Breast epithelium (tissue), 4 donors: ENCODE measurements at regions of chr14 and their contacts with region 1.

Region 1: DNA sequence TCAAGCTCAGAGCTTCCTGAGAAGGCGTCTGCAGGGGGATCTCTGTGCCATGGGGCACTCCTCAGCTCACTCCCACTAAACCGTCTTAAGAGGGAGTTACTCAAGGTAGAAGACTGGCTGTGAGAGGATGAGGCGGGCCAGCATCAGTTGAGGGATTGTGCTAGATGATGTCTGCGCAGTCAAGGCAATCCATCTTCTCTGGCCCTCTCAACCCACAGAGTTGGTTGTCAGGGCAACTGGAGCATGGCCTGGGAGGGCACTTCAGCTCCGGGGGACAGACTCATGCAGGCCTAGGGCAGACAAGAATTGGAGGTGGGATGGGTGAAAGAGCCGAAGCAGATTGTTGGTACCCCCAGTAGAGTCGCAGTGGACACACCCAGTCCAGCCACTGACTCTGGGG is 9.0 kb downstream of the GSTZ1 start:
- DNase-seq: no peak
- H3K4me3 ChIP-seq: no peak overlapping the region
- H3K27ac ChIP-seq: no peak overlapping the region
- H3K4me1 ChIP-seq: no peaks in the 10 kb centered on the region
- H3K27me3 ChIP-seq: no peaks in the 10 kb centered on the region
- CTCF ChIP-seq: no peak
- POLR2A ChIP-seq: no peak

Region 2: DNA sequence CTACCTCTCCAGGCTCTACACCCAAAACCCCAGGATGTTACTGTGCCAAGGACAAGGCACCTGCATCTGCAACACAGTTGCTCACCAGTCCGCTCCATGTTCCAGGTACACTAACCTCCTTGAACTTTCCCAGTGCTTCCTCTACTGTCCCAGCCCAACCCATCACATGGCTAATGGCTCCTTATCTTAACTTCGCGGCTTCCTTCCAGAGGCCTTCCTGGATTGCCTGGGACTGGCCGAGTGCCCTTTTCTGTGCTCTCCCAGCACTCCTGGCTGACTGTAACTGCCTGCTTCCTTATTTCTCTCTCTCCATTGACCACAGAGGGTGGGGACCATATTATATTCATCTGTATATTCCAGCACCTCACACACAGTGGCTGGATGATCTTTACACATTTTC is 30.1 kb before region 1 on chr14:
- intact Hi-C with region 1: loop called (anchors 5 kb)
- DNase-seq: no peak
- H3K4me3 ChIP-seq: no peak overlapping the region
- H3K27ac ChIP-seq: no peak overlapping the region
- H3K4me1 ChIP-seq: no peaks in the 10 kb centered on the region
- H3K27me3 ChIP-seq: no peaks in the 10 kb centered on the region
- CTCF ChIP-seq: no peak
- POLR2A ChIP-seq: no peak

Region 3: GRCh38 chr14:77314043-77314442 is 15.8 kb before region 1 on chr14:
- intact Hi-C with region 1: no loop called
- DNase-seq: peak in 1 of 2 donors; percentile 47
- H3K4me3 ChIP-seq: no peak overlapping the region
- H3K27ac ChIP-seq: peak overlapping the region; percentile 83 to 85
- H3K4me1 ChIP-seq: peaks cover 10 to 21% of the 10 kb centered on the region in 2 donors
- H3K27me3 ChIP-seq: no peaks in the 10 kb centered on the region
- CTCF ChIP-seq: no peak
- POLR2A ChIP-seq: no peak

Region 4: DNA sequence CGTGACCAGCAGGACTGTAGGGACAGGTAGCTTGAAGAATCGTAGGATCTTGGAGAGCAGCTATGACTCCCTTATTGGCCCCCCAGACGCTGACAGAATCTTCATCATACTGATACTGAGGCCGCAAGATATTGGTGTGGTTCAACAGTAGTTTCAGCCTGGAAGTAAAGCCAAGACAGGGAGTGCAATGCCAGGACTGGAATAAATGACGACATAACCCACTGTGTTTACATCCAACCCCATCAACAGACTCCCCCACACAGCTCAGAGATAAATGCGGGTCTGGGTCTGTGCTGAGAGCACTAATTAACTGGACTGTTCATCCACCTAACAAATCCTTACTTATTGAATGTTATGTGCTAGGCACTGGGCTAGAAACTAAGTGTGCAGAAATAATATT is 76.8 kb after region 1 on chr14:
- intact Hi-C with region 1: no loop called
- DNase-seq: no peak
- H3K4me3 ChIP-seq: no peak overlapping the region
- H3K27ac ChIP-seq: no peak overlapping the region
- H3K4me1 ChIP-seq: no peaks in the 10 kb centered on the region
- H3K27me3 ChIP-seq: no peaks in the 10 kb centered on the region
- CTCF ChIP-seq: no peak
- POLR2A ChIP-seq: no peak